ENCODE measurements at regions of chr10 and their contacts with region 1.

Region 1: DNA sequence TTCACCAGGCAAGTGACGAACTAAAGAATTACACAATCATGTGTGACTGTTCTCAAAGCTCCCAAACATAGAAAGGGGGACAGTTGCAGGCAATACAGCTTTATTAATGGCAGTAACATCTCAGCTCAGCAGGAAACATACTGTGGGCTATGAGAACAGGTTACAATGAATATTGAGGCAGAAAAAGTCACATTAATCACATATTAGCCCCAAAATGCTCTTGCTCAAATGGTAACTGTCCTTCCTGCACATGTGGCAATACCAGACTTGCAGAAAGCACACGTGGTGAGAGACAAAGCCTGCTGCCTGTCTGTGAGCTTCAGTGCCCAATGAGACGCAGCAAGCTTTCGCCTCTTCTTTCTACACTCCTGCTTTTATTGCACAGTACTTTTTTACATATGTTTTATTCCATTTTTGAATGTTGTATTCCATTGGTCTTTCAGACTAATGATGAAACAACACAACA is 104.9 kb upstream of the ACBD5 start:
- DNase-seq: no peak
- ATAC-seq: no peak
- H3K4me3 ChIP-seq: no peak overlapping the region
- H3K27ac ChIP-seq: no peak overlapping the region
- H3K4me1 ChIP-seq: no peaks in the 10 kb centered on the region
- H3K27me3 ChIP-seq: peaks cover 6% of the 10 kb centered on the region; the same call in 1 of the 2 replicates
- CTCF ChIP-seq: no peak

Region 2: DNA sequence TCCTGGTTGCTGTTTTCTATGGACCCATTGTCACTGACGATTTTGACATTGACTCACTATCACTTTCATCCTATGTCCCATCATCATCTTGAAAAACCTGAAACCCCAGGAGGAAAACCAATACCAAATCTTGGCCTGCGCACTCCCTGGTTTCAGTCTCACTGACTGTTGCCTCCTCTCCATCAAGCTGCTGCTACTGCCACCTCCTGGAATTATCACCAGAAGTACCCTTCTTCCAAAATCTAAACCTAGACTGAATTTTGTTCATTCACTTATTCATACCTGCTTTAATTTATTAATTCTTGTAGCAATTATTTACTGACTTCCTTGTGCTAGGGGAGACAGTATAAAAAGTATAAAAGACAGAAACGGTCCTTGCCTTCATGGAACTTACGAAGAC is 60.4 kb before region 1 on chr10:
- CTCF ChIA-PET with region 1: no interaction called
- POLR2A ChIA-PET with region 1: no interaction called
- intact Hi-C with region 1: loop called (anchors 5 kb)
- DNase-seq: peak; percentile 45
- ATAC-seq: peak; percentile 58
- H3K4me3 ChIP-seq: no peak overlapping the region
- H3K27ac ChIP-seq: no peak overlapping the region
- H3K4me1 ChIP-seq: no peaks in the 10 kb centered on the region
- H3K27me3 ChIP-seq: no peaks in the 10 kb centered on the region
- CTCF ChIP-seq: peak; percentile 54

Region 3: GRCh38 chr10:27319752-27320561 is 25.5 kb before region 1 on chr10:
- CTCF ChIA-PET with region 1: no interaction called
- POLR2A ChIA-PET with region 1: no interaction called
- intact Hi-C with region 1: no loop called
- DNase-seq: no peak
- ATAC-seq: no peak
- H3K4me3 ChIP-seq: no peak overlapping the region
- H3K27ac ChIP-seq: no peak overlapping the region
- H3K4me1 ChIP-seq: no peaks in the 10 kb centered on the region
- H3K27me3 ChIP-seq: no peaks in the 10 kb centered on the region
- CTCF ChIP-seq: no peak

Measured in PC-3 (cell line).